ENCODE measurements at regions of chr1 and their contacts with region 1.

Region 1: DNA sequence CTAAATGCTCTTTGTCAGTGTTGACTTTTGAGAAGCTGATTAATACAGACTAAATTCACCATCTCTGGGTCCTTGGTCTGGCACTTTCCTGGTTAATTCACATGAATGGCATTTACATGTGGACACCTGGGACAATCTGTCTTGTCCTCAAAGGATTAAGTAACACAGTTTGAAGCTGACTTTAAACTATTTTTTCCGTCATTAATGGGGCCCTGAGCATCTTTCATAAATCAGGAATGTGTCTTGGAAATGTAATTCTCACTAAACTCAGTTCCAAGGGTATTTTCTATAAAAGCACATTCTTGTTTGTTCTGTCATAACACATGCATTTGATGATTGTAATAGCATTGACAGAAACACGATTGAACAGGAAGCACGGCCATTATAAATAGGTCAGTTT is 26.7 kb upstream of the NBL1 start:
- DNase-seq: no peak
- H3K4me3 ChIP-seq: no peak overlapping the region
- H3K27ac ChIP-seq: no peak overlapping the region
- H3K4me1 ChIP-seq: no peaks in the 10 kb centered on the region
- H3K27me3 ChIP-seq: no peaks in the 10 kb centered on the region
- CTCF ChIP-seq: no peak
- POLR2A ChIP-seq: no peak

Region 2: GRCh38 chr1:19517017-19517416 is 100.4 kb before region 1 on chr1:
- CTCF ChIA-PET with region 1: no interaction called
- POLR2A ChIA-PET with region 1: no interaction called
- dilution Hi-C with region 1: no loop called
- intact Hi-C with region 1: no loop called
- DNase-seq: no peak
- H3K4me3 ChIP-seq: no peak overlapping the region
- H3K27ac ChIP-seq: no peak overlapping the region
- H3K4me1 ChIP-seq: no peaks in the 10 kb centered on the region
- H3K27me3 ChIP-seq: peaks cover 2 to 3% of the 10 kb centered on the region in 2 experiments
- CTCF ChIP-seq: no peak
- POLR2A ChIP-seq: no peak

Region 3: DNA sequence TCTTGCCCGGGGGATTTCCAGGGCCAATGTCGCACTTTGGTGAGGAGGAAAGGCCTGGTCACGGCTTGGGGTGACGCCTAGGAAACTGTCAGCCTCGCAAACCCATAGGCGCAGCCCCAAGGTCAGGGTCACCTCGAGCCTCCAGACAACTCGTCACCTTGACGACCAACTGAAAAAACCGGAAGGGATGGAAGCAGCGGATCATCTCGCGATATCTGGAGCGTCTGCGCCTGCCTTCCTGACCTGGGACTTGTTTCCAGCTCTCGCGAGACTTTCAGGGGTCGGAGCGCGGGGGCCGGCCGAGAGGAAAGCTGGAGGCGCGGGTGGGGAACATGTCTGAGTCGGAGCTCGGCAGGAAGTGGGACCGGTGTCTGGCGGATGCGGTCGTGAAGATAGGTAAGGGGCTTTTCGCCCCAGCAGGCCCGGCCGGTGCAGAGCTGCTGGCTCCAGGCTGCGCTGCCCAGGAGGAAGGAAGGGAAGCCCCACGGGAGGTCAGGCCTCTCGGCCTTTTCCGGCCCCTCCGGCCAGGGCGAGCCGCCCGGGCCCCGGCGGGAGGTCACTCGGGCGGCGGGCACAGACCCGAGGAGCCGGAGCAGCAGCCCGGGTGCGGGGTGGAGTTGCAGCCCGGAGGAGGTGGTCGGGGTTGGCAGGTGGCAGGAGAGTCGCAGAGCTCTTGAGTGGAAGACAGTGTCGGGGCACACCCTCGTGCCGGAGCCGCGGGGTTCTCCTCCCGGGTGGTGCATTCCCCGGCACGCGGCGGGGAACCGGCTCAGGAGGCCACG is 20.5 kb before region 1 on chr1:
- CTCF ChIA-PET with region 1: no interaction called
- POLR2A ChIA-PET with region 1: no interaction called
- dilution Hi-C with region 1: no loop called
- intact Hi-C with region 1: no loop called
- DNase-seq: peak; percentile 97
- H3K4me3 ChIP-seq: peak overlapping the region; percentile 73 to 98 (median 91)
- H3K27ac ChIP-seq: peak overlapping the region; percentile 96
- H3K4me1 ChIP-seq: peaks cover 12% of the 10 kb centered on the region
- H3K27me3 ChIP-seq: peaks cover 2% of the 10 kb centered on the region in 2 experiments
- CTCF ChIP-seq: no peak
- POLR2A ChIP-seq: peak; percentile 70

Region 4: DNA sequence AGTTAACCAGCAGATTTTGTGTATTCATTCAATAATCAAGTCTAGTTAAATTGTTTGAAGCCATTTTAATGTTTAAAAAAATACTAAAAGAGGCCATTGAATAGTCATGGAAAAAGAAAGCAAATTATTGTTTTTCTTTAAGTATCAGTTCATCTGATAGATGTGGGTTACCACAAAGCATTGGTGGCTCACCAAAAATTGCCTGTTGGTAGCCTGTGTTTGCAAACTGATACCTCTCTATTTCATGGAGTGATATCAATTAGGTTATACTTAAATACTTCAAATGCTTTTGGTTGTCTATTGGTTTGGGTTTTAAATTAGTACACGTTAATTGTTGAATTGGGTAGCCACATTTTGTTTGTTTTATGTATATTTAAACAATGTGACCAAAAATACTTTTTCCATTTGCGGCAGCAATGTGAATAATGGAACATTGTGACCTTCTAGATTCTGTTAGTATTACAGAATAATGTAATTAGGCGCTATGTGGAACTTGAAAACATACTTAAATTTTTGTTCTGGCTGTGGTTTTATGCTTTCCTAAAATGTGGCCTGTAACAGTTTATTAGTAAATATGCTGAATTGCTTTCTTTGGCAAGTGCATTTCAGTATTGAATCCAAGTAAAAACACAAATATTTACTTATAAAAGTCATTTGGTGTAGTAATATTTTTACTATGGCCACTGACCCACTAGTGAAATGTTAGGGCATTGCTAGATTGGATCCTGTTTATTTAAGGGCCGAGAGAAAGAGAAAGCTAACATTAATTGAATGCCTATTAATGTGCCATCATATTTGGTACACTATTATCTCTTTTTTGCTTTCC is 10.3 kb before region 1 on chr1:
- CTCF ChIA-PET with region 1: interaction called, 4 read pairs
- POLR2A ChIA-PET with region 1: interaction called, 10 read pairs
- dilution Hi-C with region 1: no loop called
- intact Hi-C with region 1: no loop called
- DNase-seq: peak; percentile 8
- H3K4me3 ChIP-seq: no peak overlapping the region
- H3K27ac ChIP-seq: no peak overlapping the region
- H3K4me1 ChIP-seq: no peaks in the 10 kb centered on the region
- H3K27me3 ChIP-seq: no peaks in the 10 kb centered on the region
- CTCF ChIP-seq: no peak
- POLR2A ChIP-seq: no peak